B cell (primary cell): ENCODE measurements at regions of chr14 and their contacts with region 1.

Region 1: GRCh38 chr14:24160850-24161804 is at the start of gene IRF9:
- DNase-seq: peak; percentile 97
- ATAC-seq: peak; percentile 94
- H3K4me3 ChIP-seq: peak within 1 kb of the TSS; percentile 69 to 100 (median 91)
- H3K4me3 Mint-ChIP-seq: peak within 1 kb of the TSS; percentile 100
- H3K27ac ChIP-seq: peak within 1 kb of the TSS; percentile 85 to 88
- H3K27ac Mint-ChIP-seq: peak within 1 kb of the TSS; percentile 99
- H3K4me1 ChIP-seq: peaks cover 29 to 39% of the 10 kb centered on the region in 2 donors
- H3K4me1 Mint-ChIP-seq: peaks cover 42% of the 10 kb centered on the region
- H3K27me3 ChIP-seq: no peaks in the 10 kb centered on the region
- H3K27me3 Mint-ChIP-seq: no peaks in the 10 kb centered on the region
- CTCF ChIP-seq: peak; percentile 81
- total RNA-seq, gene IRF9: 243 and 269 TPM in 2 replicates

Region 2: DNA sequence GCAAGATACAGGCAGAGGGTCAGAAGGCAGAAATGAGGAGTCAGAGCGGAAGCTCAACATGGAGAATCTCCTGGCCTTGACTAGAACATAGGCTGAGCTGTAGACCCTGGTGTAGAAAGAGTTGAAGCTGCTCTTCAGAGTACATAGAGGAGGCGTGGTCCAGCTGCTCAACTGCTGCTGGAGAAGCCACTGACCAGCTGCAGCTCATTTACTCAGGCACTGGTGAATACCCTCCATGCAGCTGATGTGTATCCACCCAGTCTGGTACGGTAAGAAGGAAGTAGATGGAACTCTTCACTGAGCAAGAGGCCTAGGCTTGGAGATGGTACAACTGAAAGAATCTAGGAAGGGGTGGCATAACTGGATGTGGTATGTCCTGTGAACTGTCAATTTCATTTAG is 356.3 kb before region 1 on chr14:
- CTCF ChIA-PET with region 1: no interaction called
- POLR2A ChIA-PET with region 1: no interaction called
- intact Hi-C with region 1: no loop called
- DNase-seq: no peak
- ATAC-seq: no peak
- H3K4me3 ChIP-seq: no peak overlapping the region
- H3K4me3 Mint-ChIP-seq: no peak overlapping the region
- H3K27ac ChIP-seq: no peak overlapping the region
- H3K27ac Mint-ChIP-seq: no peak overlapping the region
- H3K4me1 ChIP-seq: no peaks in the 10 kb centered on the region
- H3K4me1 Mint-ChIP-seq: no peaks in the 10 kb centered on the region
- H3K27me3 ChIP-seq: no peaks in the 10 kb centered on the region
- H3K27me3 Mint-ChIP-seq: peaks cover 11% of the 10 kb centered on the region
- CTCF ChIP-seq: no peak

Region 3: GRCh38 chr14:24058260-24058950 is 102.7 kb before region 1 on chr14:
- CTCF ChIA-PET with region 1: interaction called, 26 read pairs
- POLR2A ChIA-PET with region 1: no interaction called
- intact Hi-C with region 1: loop called (anchors 1 kb)
- DNase-seq: no peak
- ATAC-seq: peak; percentile 68
- H3K4me3 ChIP-seq: no peak overlapping the region
- H3K4me3 Mint-ChIP-seq: no peak overlapping the region
- H3K27ac ChIP-seq: no peak overlapping the region
- H3K27ac Mint-ChIP-seq: no peak overlapping the region
- H3K4me1 ChIP-seq: no peaks in the 10 kb centered on the region
- H3K4me1 Mint-ChIP-seq: peaks cover 1% of the 10 kb centered on the region
- H3K27me3 ChIP-seq: peaks cover 0 to 26% (median 5%) of the 10 kb centered on the region in 4 experiments
- H3K27me3 Mint-ChIP-seq: no peaks in the 10 kb centered on the region
- CTCF ChIP-seq: peak; percentile 75

Region 4: GRCh38 chr14:24108336-24108874 is 52.7 kb before region 1 on chr14:
- CTCF ChIA-PET with region 1: interaction called, 63 read pairs
- POLR2A ChIA-PET with region 1: interaction called, 35 read pairs
- intact Hi-C with region 1: loop called (anchors 1 kb)
- DNase-seq: no peak
- ATAC-seq: peak; percentile 14
- H3K4me3 ChIP-seq: no peak overlapping the region
- H3K4me3 Mint-ChIP-seq: no peak overlapping the region
- H3K27ac ChIP-seq: peak overlapping the region; percentile 44 to 68
- H3K27ac Mint-ChIP-seq: peak overlapping the region; percentile 95
- H3K4me1 ChIP-seq: peaks cover 10 to 13% of the 10 kb centered on the region in 2 donors
- H3K4me1 Mint-ChIP-seq: peaks cover 11% of the 10 kb centered on the region
- H3K27me3 ChIP-seq: no peaks in the 10 kb centered on the region
- H3K27me3 Mint-ChIP-seq: no peaks in the 10 kb centered on the region
- CTCF ChIP-seq: no peak

Region 5: DNA sequence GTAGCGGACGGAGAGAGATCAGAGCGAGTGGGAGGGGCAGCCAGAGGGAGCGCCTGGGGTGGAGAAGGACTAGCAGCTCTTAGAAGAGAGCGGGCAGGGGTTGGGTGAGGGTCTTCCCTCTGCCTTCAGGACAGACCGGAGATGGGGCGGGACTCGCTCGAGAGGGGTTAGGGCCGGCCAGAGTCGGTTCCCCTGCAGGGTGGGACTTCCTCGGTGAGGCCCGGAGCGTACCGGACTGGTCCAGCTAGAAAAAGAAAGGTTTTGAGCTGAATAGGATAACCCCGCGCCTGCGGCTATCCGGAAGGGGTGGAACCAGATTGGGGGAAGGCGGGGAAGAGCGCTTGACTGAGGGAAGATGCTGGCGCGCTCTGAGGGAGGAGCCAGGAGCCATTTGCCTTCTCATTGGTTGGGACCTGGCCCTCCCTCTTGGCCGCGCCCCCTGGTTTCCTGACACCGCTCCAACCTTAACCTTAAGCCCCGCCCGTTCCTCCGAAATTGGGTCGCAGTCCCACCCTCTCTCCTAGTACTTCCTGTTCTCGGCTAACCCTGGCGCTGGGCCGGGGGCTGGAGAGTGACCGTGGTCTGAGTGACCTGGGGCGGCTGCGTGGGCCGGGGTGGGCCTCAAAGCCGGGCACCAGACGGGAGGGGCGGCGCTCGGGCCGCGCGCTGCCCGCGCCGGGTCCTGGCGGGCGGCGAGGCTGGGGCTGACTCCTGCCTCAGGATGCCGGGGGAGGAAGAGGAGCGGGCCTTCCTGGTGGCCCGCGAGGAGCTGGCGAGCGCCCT is 14.0 kb before region 1 on chr14 and contains the start of gene RNF31:
- CTCF ChIA-PET with region 1: interaction called, 62 read pairs
- POLR2A ChIA-PET with region 1: interaction called, 17 read pairs
- intact Hi-C with region 1: loop called (anchors 1 kb)
- DNase-seq: peak; percentile 98
- ATAC-seq: peak; percentile 84
- H3K4me3 ChIP-seq: peak within 1 kb of the TSS; percentile 83 to 95 (median 94)
- H3K4me3 Mint-ChIP-seq: peak within 1 kb of the TSS; percentile 95
- H3K27ac ChIP-seq: peak within 1 kb of the TSS; percentile 77 to 90
- H3K27ac Mint-ChIP-seq: peak within 1 kb of the TSS; percentile 95
- H3K4me1 ChIP-seq: peaks cover 21 to 35% of the 10 kb centered on the region in 2 donors
- H3K4me1 Mint-ChIP-seq: peaks cover 50% of the 10 kb centered on the region
- H3K27me3 ChIP-seq: no peaks in the 10 kb centered on the region
- H3K27me3 Mint-ChIP-seq: no peaks in the 10 kb centered on the region
- CTCF ChIP-seq: no peak
- total RNA-seq, gene RNF31: 103 and 114 TPM in 2 replicates

Region 6: GRCh38 chr14:24195191-24196070 is 34.3 kb after region 1 on chr14 and contains the start of gene TM9SF1:
- CTCF ChIA-PET with region 1: interaction called, 12 read pairs
- POLR2A ChIA-PET with region 1: interaction called, 16 read pairs
- intact Hi-C with region 1: loop called (anchors 1 kb)
- DNase-seq: peak; percentile 96
- ATAC-seq: peak; percentile 90
- H3K4me3 ChIP-seq: peak within 1 kb of the TSS; percentile 82 to 99 (median 83)
- H3K4me3 Mint-ChIP-seq: peak within 1 kb of the TSS; percentile 89
- H3K27ac ChIP-seq: peak within 1 kb of the TSS; percentile 98 to 99
- H3K27ac Mint-ChIP-seq: peak within 1 kb of the TSS; percentile 99
- H3K4me1 ChIP-seq: peaks cover 25 to 26% of the 10 kb centered on the region in 2 donors
- H3K4me1 Mint-ChIP-seq: peaks cover 49% of the 10 kb centered on the region
- H3K27me3 ChIP-seq: no peaks in the 10 kb centered on the region
- H3K27me3 Mint-ChIP-seq: no peaks in the 10 kb centered on the region
- CTCF ChIP-seq: no peak
- total RNA-seq, gene TM9SF1: 24.5 and 33.9 TPM in 2 replicates

Region 7: GRCh38 chr14:24299255-24300195 is 138.4 kb after region 1 on chr14 and contains the starts of genes DHRS1 and NOP9:
- CTCF ChIA-PET with region 1: no interaction called
- POLR2A ChIA-PET with region 1: interaction called, 3 read pairs
- intact Hi-C with region 1: loop called (anchors 1 kb)
- DNase-seq: peak; percentile 95
- ATAC-seq: peak; percentile 86
- H3K4me3 ChIP-seq: peak within 1 kb of the TSS; percentile 58 to 93 (median 77)
- H3K4me3 Mint-ChIP-seq: peak within 1 kb of the TSS; percentile 96
- H3K27ac ChIP-seq: peak within 1 kb of the TSS; percentile 79 to 83
- H3K27ac Mint-ChIP-seq: peak within 1 kb of the TSS; percentile 98
- H3K4me1 ChIP-seq: peaks cover 30 to 41% of the 10 kb centered on the region in 2 donors
- H3K4me1 Mint-ChIP-seq: peaks cover 48% of the 10 kb centered on the region
- H3K27me3 ChIP-seq: no peaks in the 10 kb centered on the region
- H3K27me3 Mint-ChIP-seq: no peaks in the 10 kb centered on the region
- CTCF ChIP-seq: no peak
- total RNA-seq, gene DHRS1: 42.7 and 43.7 TPM in 2 replicates
- total RNA-seq, gene NOP9: 22.6 and 24.5 TPM in 2 replicates